Calu3 (cell line): ENCODE measurements at regions of chr7 and their contacts with region 1.

Region 1: DNA sequence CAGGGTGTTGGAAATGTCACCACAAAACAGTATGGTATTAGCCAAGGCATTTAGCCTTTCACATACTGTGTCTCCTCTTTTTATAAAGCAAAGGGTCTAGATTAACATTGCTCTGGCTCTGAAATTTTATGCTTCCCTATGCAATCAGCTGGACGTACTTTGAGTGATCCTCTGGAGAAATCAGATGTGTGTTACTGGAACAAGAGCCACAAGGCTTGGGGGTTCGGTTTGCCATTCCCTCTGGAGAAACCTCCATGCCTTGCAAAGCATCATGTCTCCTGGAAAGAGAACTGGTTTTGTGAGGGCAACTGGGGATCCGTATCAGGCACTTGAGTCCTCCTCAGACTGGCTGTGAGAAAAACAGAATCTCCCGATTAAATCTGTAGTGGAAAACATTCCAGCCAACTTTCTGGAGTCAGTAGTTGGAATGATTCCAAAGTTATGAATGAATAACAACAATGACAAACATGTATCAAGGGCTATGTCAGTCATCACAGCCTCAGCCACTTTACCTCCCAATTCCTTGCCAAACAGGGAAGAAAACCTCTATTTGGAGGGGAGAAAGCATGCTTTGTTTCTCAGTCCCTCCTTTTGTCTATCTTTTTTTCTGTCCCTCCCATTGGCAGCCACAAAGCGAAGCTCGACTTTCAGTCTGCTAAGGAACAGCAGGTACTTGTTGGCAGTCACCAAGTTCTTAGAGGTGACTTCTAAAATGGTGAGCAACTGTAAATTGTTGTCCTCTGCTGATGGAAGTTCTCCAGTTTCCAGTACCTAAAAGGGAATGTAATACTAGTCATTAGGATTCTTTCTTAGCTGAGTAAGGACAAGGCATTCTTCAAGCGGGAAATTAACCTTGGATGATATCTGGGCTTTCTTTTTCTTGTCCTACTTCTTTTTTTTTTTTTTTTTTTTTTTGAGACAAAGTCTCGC is 864.8 kb upstream of the AUTS2 start:
- DNase-seq: no peak
- H3K4me3 Mint-ChIP-seq: no peak overlapping the region
- H3K27ac Mint-ChIP-seq: no peak overlapping the region
- H3K4me1 Mint-ChIP-seq: no peaks in the 10 kb centered on the region
- H3K27me3 Mint-ChIP-seq: no peaks in the 10 kb centered on the region
- CTCF ChIP-seq: no peak

Region 2: GRCh38 chr7:68133045-68133444 is 600.4 kb before region 1 on chr7:
- CTCF ChIA-PET with region 1: no interaction called
- intact Hi-C with region 1: no loop called
- DNase-seq: no peak
- H3K4me3 Mint-ChIP-seq: no peak overlapping the region
- H3K27ac Mint-ChIP-seq: no peak overlapping the region
- H3K4me1 Mint-ChIP-seq: no peaks in the 10 kb centered on the region
- H3K27me3 Mint-ChIP-seq: no peaks in the 10 kb centered on the region
- CTCF ChIP-seq: no peak

Region 3: DNA sequence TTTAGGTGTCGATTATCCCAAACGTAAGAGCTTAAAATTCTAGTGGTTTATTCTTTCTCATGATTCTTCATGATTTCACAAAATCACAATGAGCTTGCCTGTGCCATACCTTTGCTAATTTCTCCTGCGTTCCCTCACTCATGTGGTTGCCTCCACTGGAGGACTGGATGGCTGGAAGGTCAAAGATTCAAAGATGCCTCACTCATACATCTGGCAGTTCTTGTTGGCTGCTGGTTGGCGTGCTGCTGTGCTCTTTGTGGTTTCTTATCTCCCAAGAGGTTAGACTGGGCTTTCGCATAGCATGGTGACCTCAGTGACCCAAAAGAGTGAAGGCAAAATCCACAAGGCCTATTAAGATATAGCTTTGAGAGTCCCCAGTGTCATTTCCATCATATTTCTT is 12.8 kb before region 1 on chr7:
- CTCF ChIA-PET with region 1: interaction called, 11 read pairs
- intact Hi-C with region 1: no loop called
- DNase-seq: no peak
- H3K4me3 Mint-ChIP-seq: no peak overlapping the region
- H3K27ac Mint-ChIP-seq: no peak overlapping the region
- H3K4me1 Mint-ChIP-seq: no peaks in the 10 kb centered on the region
- H3K27me3 Mint-ChIP-seq: no peaks in the 10 kb centered on the region
- CTCF ChIP-seq: no peak